ENCODE measurements at regions of chr20 and their contacts with region 1.

Region 1: GRCh38 chr20:41317536-41318270 is at the start of gene ZHX3:
- DNase-seq: peak; percentile 96
- H3K4me3 Mint-ChIP-seq: peak within 1 kb of the TSS; percentile 99
- H3K27ac Mint-ChIP-seq: peak within 1 kb of the TSS; percentile 63
- H3K4me1 Mint-ChIP-seq: peaks cover 29% of the 10 kb centered on the region
- H3K27me3 Mint-ChIP-seq: no peaks in the 10 kb centered on the region
- CTCF ChIP-seq: no peak
- total RNA-seq, gene ZHX3: 23.8 and 34.1 TPM in 2 replicates

Region 2: GRCh38 chr20:40945754-40946450 is 371.8 kb before region 1 on chr20:
- CTCF ChIA-PET with region 1: no interaction called
- POLR2A ChIA-PET with region 1: no interaction called
- intact Hi-C with region 1: no loop called
- DNase-seq: peak; percentile 52
- H3K4me3 Mint-ChIP-seq: no peak overlapping the region
- H3K27ac Mint-ChIP-seq: no peak overlapping the region
- H3K4me1 Mint-ChIP-seq: peaks cover 6% of the 10 kb centered on the region
- H3K27me3 Mint-ChIP-seq: no peaks in the 10 kb centered on the region
- CTCF ChIP-seq: peak; percentile 16

Region 3: GRCh38 chr20:41249406-41250281 is 68.1 kb before region 1 on chr20:
- CTCF ChIA-PET with region 1: interaction called, 5 read pairs
- POLR2A ChIA-PET with region 1: interaction called, 9 read pairs
- intact Hi-C with region 1: loop called (anchors 5 kb)
- DNase-seq: peak; percentile 82
- H3K4me3 Mint-ChIP-seq: peak overlapping the region; percentile 26
- H3K27ac Mint-ChIP-seq: peak overlapping the region; percentile 97
- H3K4me1 Mint-ChIP-seq: peaks cover 41% of the 10 kb centered on the region
- H3K27me3 Mint-ChIP-seq: no peaks in the 10 kb centered on the region
- CTCF ChIP-seq: peak; percentile 21

Region 4: GRCh38 chr20:41329435-41330342 is 12.0 kb after region 1 on chr20:
- CTCF ChIA-PET with region 1: interaction called, 6 read pairs
- POLR2A ChIA-PET with region 1: interaction called, 18 read pairs
- intact Hi-C with region 1: loop called (anchors 1 kb)
- DNase-seq: peak; percentile 92
- H3K4me3 Mint-ChIP-seq: peak overlapping the region; percentile 28
- H3K27ac Mint-ChIP-seq: peak overlapping the region; percentile 89
- H3K4me1 Mint-ChIP-seq: peaks cover 15% of the 10 kb centered on the region
- H3K27me3 Mint-ChIP-seq: no peaks in the 10 kb centered on the region
- CTCF ChIP-seq: no peak

Measured in MCF 10A (cell line).